ENCODE measurements at regions of chr9 and their contacts with region 1.

Region 1: GRCh38 chr9:100341889-100342288 is 10.9 kb downstream of the TEX10 start:
- DNase-seq: no peak
- CTCF ChIP-seq: no peak

Region 2: DNA sequence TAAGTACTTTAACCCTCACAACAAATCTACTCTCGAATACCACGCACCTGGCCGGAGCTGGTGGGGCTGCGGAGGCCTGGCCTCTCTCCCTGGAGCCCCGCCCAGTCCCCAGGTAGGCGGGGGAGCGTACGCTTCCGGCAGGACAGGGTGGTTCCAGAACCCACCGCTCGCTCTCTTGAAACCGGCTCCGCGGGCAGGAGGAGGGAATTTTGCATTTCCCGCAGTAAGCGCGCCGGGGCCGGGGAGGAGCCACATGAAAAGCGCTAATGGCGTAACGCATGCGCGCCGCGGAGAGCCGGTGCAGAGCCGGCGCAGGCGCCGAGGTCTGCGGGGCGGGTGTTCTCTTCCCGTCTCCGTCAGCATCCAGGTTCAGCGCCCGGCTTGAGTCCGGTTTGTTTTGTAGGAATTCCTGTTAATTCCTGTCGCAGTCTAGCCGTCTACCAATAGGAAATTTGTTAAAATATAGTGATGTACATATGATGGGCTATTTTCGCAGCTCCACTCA is 256.8 kb after region 1 on chr9:
- in situ Hi-C with region 1: loop called (anchors 10 kb)
- DNase-seq: peak; percentile 79
- CTCF ChIP-seq: no peak